Activated naive CD4-positive, alpha-beta T cell treated with anti-CD3 and anti-CD28 coated beads for 36 hours (primary cell): ENCODE measurements at regions of chr1 and their contacts with region 1.

Region 1: GRCh38 chr1:89524369-89525168 is at the start of gene LRRC8B:
- DNase-seq: peak; percentile 93
- H3K4me3 Mint-ChIP-seq: no peak within 1 kb of the TSS
- H3K27ac Mint-ChIP-seq: no peak within 1 kb of the TSS
- H3K4me1 Mint-ChIP-seq: peaks cover 34% of the 10 kb centered on the region
- H3K27me3 Mint-ChIP-seq: no peaks in the 10 kb centered on the region
- total RNA-seq, gene LRRC8B: 18.0 to 20.4 TPM

Region 2: GRCh38 chr1:88990426-88990825 is 534.1 kb before region 1 on chr1:
- CTCF ChIA-PET with region 1: no interaction called
- intact Hi-C with region 1: loop called (anchors 1 kb)
- DNase-seq: no peak
- H3K4me3 Mint-ChIP-seq: peak overlapping the region; percentile 10
- H3K27ac Mint-ChIP-seq: peak overlapping the region; percentile 10
- H3K4me1 Mint-ChIP-seq: peaks cover 45% of the 10 kb centered on the region
- H3K27me3 Mint-ChIP-seq: no peaks in the 10 kb centered on the region

Region 3: DNA sequence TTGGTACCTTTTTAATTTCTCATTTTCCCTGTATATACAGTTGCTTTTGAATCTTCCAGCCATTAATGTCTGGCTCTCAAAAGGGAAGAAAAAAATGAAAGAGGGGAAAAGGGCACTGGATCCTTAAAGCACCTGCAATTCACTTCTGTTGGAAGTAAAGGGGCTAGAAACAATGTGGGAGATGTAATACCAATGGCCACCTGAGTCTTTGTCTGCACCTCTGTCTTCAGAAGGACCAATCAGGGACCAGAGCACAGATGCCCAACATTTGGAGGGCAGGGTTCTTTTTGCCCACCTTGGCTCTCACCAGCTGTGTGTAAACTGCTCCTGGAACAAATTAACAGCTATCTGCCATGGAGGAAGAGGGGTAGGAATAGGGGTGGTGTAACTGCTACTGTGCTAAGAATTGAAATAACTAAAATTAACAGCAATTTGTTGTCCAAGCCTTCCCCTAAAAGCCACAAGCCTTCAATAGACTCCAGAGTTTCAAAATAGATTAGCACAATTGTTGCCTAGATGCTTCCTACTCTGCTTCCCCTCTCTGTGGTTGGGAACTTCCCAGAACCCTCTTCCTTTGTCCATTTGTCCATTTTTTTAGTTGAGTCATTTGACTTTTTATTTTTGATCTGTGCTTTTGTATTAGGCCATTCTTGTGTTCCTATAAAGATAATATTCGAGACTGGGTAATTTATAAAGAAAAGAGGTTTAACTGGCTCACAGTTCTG is 11.4 kb before region 1 on chr1:
- CTCF ChIA-PET with region 1: no interaction called
- intact Hi-C with region 1: no loop called
- DNase-seq: no peak
- H3K4me3 Mint-ChIP-seq: no peak overlapping the region
- H3K27ac Mint-ChIP-seq: no peak overlapping the region
- H3K4me1 Mint-ChIP-seq: no peaks in the 10 kb centered on the region
- H3K27me3 Mint-ChIP-seq: no peaks in the 10 kb centered on the region

Region 4: GRCh38 chr1:89536555-89537341 is 12.2 kb after region 1 on chr1:
- CTCF ChIA-PET with region 1: interaction called, 4 read pairs
- intact Hi-C with region 1: loop called (anchors 1 kb)
- DNase-seq: peak; percentile 45
- H3K4me3 Mint-ChIP-seq: no peak overlapping the region
- H3K27ac Mint-ChIP-seq: peak overlapping the region; percentile 79
- H3K4me1 Mint-ChIP-seq: peaks cover 86% of the 10 kb centered on the region
- H3K27me3 Mint-ChIP-seq: no peaks in the 10 kb centered on the region

Region 5: GRCh38 chr1:89598450-89599331 is 74.1 kb after region 1 on chr1:
- CTCF ChIA-PET with region 1: interaction called, 35 read pairs
- intact Hi-C with region 1: loop called (anchors 1 kb)
- DNase-seq: no peak
- H3K4me3 Mint-ChIP-seq: no peak overlapping the region
- H3K27ac Mint-ChIP-seq: peak overlapping the region; percentile 24
- H3K4me1 Mint-ChIP-seq: peaks cover 85% of the 10 kb centered on the region
- H3K27me3 Mint-ChIP-seq: no peaks in the 10 kb centered on the region

Region 6: GRCh38 chr1:89615676-89616598 is 91.4 kb after region 1 on chr1:
- CTCF ChIA-PET with region 1: interaction called, 4 read pairs
- intact Hi-C with region 1: loop called (anchors 1 kb)
- DNase-seq: no peak
- H3K4me3 Mint-ChIP-seq: no peak overlapping the region
- H3K27ac Mint-ChIP-seq: no peak overlapping the region
- H3K4me1 Mint-ChIP-seq: peaks cover 65% of the 10 kb centered on the region
- H3K27me3 Mint-ChIP-seq: no peaks in the 10 kb centered on the region

Region 7: DNA sequence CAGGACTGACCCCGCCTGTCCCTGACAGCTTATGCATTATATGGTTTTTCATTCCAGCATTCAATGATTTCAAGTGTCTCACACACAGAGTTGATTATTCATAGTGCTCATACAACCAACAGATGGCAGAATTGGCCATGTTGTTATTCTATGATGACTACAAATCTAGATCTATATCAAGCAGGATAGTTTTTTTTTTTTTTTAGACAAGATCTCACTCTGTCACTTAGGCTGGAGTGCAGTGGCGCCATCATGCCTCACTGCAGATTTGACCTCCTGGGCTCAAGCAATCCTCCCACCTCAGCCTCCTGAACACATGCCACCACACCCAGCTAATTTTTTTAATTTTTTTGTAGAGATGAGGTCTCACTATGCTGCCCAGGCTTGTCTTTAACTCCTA is 256.2 kb after region 1 on chr1:
- CTCF ChIA-PET with region 1: no interaction called
- intact Hi-C with region 1: loop called (anchors 1 kb)
- DNase-seq: peak; percentile 57
- H3K4me3 Mint-ChIP-seq: peak overlapping the region; percentile 39
- H3K27ac Mint-ChIP-seq: peak overlapping the region; percentile 88
- H3K4me1 Mint-ChIP-seq: peaks cover 49% of the 10 kb centered on the region
- H3K27me3 Mint-ChIP-seq: no peaks in the 10 kb centered on the region